Cardiac septum (tissue), 1 donor: ENCODE measurements at regions of chr16 and their contacts with region 1.

Region 1: GRCh38 chr16:56163938-56164337 is 27.4 kb upstream of the GNAO1 start:
- DNase-seq: no peak

Region 2: DNA sequence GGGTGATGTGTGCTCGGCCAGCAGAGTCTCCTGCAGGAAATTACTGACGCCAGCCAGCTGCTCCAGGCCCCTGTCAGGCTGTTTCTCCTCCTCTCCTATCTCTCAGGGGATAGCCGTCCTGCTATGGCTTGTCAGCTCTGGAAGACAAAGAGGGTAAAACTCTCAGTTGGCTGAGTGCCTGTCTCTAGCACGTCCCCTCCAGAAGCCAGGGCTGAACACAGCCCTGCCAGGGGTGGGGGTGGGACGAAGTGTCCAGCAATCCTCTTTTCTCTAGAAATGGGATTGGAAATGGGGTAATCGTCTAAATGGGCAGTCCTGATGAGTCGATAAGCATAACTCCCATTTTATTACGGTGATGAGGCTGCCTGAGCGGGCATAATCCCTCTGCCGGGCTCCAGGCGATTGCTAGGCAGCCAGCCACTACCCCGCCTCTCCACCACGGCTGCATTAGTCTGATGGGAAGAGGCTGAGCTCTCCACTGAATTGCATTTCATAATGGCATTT is 61.7 kb before region 1 on chr16:
- intact Hi-C with region 1: loop called (anchors 5 kb)
- DNase-seq: no peak